ENCODE measurements at regions of chr10 and their contacts with region 1.

Region 1: DNA sequence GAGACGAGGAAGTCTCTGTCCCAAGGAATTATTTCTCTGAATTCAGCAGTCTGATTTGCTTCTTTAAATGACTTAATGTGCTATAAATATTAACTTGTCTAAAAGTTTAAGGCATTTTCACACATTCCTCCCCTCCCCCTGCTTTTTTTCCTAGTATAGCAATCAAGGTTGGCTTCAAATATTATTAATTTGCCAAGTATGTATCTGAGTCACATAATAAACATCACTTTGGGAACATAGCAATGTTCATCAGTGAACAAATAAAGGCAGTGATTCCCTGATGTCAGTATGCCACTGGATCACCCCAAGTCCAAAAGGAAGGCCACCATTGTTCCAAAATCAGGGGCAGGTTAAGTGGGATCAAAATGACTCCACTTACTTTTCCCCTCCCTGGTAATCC is 40.5 kb downstream of the PDE6C start:
- ATAC-seq: no peak
- H3K4me3 ChIP-seq: no peak overlapping the region
- H3K27ac ChIP-seq: no peak overlapping the region
- H3K4me1 ChIP-seq: no peaks in the 10 kb centered on the region

Region 2: DNA sequence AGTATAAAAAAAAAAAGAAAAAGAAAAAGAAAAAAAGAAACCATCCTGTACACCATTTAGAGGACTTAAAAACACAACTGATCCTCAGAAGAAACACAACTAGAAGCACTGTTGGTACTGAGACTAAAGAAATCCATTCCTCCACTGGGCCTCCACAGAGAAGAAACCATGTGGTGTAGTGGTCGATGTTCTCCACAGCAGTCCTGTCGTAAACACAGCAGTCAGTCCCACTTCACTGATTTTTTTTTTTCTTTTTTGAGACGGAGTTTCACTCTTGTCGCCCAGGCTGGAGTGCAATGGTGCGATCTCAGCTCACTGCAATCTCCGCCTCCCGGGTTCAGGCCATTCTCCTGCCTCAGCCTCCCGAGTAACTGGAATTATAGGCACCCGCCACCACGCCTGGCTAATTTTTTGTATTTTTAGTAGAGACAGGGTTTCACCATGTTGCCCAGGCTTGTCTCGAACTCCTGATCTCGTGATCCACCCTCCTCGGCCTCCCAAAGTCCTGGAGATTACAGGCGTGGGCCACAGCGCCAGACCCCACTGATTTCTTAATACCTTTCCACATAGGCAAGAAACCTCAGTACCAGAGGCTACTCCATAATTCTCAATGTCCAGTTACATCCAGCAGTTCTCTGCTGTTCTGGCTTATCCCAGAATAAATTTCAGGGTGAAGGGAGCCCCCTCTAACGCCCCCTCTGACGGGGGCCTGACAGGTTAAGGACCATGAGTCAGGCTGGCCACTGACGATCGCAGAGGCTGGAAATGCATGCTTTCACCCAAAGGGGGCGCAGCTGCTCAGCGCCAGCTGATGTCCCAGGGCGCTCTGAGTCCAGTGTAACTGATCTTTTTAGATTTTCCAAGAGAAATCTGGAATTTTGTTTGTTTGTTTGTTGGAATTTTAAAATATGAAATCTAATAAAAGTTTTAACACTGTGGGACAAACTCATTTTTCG is 111.2 kb before region 1 on chr10:
- in situ Hi-C with region 1: no loop called
- ATAC-seq: peak; percentile 70 to 99 (median 80)
- H3K4me3 ChIP-seq: no peak overlapping the region
- H3K27ac ChIP-seq: no peak overlapping the region
- H3K4me1 ChIP-seq: no peaks in the 10 kb centered on the region

Region 3: DNA sequence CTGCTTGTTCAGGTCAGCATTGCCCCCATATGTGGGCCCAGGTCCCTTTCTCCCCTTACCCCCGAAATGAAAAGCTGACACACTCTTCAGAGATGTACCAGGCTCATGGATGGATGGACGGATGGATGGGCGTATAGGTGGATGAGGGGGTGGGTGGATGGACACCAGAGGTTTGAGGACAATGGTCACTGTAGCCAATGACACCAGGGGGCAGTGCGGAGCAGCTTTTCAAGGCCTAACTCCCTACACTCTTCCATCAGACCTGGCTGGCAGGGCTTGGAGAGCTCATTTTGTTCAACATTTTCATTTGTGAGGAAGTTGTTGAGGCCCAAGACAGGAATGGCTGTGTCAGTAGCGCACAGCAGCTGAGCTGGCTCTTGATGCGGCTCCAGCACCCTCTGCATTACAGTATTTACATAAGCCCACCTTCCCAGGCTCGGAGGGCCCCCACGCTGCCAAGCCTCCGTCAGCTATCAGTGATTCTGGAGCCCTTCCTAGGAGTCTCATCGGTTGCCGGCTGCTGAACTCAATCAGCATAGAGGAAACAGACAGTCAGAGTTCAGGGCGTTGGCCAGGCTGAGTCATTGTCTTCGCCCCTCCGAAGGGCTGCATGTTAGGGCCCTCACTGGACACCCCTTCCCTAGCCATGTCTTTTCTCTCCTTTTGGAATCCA is 98.0 kb before region 1 on chr10:
- in situ Hi-C with region 1: loop called in 1 of 9 experiments (anchors 25 kb)
- ATAC-seq: peak; percentile 45 to 97 (median 72)
- H3K4me3 ChIP-seq: no peak overlapping the region
- H3K27ac ChIP-seq: no peak overlapping the region
- H3K4me1 ChIP-seq: peaks cover 15 to 21% of the 10 kb centered on the region in 2 donors